Activated CD4-positive, alpha-beta T cell treated with anti-CD3 and anti-CD28 coated beads for 36 hours (primary cell): ENCODE measurements at regions of chr14 and their contacts with region 1.

Region 1: DNA sequence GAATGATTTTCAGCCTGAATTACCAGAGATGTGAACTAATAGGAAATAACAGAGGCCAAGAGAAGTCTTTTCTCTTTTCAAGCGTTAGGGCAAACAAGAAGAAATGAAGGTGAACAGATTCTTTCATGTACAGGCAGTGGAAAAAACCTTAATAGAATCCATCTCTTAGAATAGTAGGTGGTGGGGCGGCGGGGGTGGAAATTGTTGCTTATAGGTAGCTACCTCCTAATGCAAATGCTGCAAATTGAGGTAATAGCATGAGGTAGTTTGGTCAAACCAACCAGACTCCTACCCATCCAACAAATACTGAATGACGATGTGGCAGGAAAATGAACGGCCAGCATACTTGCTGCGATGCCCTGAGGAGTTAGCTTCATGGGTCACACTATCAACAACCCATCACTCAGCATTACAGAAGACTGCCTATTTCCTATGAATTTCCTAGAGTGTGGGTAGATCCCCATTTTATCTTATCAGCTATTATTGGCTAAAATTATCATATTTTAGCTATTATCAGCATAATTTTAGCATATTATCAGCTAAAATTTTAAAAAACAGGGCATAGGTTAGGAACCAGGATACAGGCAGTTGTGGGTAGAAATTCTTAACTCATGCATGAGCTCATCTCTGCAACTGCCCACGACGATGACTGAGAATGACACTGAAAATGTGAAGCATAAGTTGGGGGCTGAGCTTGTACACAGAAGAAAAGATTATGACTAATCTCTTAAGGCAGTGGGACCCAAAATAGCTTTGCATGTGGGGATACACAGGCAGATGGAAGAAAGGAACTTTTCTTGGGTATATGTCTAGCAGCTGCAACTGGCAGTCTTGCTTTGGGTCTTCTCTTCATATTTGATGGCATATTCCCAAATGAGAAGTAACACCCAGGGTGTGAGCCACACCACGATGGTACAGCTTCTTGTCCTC is 68.7 kb downstream of the NIN start:
- DNase-seq: peak; percentile 79
- ATAC-seq: peak; percentile 99
- H3K4me3 Mint-ChIP-seq: no peak overlapping the region
- H3K27ac Mint-ChIP-seq: peak overlapping the region; percentile 58
- H3K4me1 Mint-ChIP-seq: peaks cover 31% of the 10 kb centered on the region
- H3K27me3 Mint-ChIP-seq: no peaks in the 10 kb centered on the region

Region 2: DNA sequence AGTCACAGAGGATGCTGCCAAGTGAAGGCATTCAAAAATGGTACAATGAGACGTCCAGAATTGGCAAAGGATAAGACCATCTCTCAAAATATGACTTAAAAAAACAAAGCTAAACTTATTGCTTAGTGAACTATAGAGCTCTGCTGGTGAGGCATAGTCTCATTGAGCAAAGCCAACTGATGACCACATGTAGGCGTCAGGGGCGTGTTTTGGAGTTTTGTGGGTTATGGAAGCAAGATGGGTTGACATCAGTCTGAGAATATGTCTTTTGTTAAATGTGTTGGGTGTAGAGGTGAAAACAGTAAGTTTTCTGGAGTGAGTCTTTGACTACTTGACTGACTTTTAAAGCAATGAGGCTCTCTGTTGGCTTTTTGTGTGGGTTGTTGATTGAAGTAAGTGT is 155.1 kb before region 1 on chr14:
- CTCF ChIA-PET with region 1: no interaction called
- POLR2A ChIA-PET with region 1: interaction called, 10 read pairs
- intact Hi-C with region 1: no loop called
- DNase-seq: peak; percentile 74
- ATAC-seq: peak; percentile 86
- H3K4me3 Mint-ChIP-seq: no peak overlapping the region
- H3K27ac Mint-ChIP-seq: no peak overlapping the region
- H3K4me1 Mint-ChIP-seq: peaks cover 4% of the 10 kb centered on the region
- H3K27me3 Mint-ChIP-seq: no peaks in the 10 kb centered on the region

Region 3: DNA sequence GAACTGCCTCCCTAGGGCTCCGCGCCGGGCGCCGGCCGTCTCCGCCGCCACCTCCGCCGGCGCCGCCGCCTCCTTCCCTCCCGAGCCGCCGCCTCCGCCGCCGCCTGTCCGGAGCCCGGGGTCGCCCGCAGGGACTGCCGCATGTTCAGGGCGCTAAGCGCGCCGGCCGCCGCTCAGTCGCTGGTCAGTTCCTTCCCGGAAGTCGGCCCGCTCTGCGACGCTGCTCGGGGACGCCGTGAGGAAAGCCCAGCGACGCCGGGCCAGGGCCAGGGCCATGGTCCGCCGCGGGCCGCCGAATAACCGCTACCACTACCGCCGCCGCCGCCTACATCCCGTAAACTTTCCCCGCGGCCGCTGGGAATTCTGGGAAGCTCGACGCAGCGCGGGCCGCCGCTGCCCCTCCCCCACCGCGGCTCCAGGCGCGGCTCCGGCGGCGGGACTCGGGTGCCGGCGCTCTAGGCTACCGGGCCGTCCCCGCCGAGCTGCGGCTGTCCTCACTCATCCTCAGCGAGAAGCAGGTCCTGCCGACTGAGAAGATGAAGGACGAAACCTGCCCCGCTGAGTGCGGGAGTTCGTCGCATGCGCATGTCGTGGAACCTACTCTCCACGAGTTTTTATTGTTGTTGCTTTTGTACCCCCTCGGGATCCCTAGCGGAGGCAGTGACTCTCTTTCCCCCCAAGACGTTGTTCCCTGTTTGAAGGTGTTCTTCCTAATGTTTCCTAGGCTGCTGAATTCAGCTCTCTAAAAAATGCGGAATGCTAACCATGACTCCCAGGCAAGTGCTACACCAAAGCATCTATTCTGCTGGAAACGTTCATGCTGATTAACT is 94.1 kb before region 1 on chr14 and contains the start of gene SAV1:
- CTCF ChIA-PET with region 1: no interaction called
- POLR2A ChIA-PET with region 1: interaction called, 5 read pairs
- intact Hi-C with region 1: loop called (anchors 1 to 2 kb)
- DNase-seq: peak; percentile 71
- ATAC-seq: peak; percentile 79
- H3K4me3 Mint-ChIP-seq: no peak within 1 kb of the TSS
- H3K27ac Mint-ChIP-seq: peak within 1 kb of the TSS; percentile 80
- H3K4me1 Mint-ChIP-seq: peaks cover 12% of the 10 kb centered on the region
- H3K27me3 Mint-ChIP-seq: no peaks in the 10 kb centered on the region
- total RNA-seq, gene SAV1: 13.6 TPM

Region 4: DNA sequence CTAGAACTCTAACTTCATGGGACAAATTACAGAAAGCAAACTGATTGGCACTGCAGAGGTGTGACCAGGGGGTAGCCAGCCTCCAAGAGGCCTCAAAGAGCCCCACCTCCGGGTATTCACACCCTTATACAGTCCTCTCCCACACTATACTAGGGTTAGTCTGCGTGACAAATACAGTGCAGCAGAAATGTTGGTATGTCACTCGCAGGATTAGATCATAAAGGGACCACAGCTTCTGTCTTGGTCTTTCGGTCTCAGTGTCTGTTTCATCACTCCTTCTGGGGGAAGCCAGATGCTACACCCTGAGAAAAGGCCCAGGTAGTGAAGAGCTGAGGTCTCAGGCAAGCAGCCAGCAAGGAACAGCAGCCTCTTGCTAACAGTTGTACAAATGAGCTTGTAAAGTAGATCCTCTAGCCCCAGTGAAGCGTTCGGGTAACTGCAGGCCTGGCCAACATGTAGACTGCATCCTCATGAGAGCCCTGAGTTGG is 25.3 kb before region 1 on chr14:
- CTCF ChIA-PET with region 1: interaction called, 9 read pairs
- POLR2A ChIA-PET with region 1: interaction called, 10 read pairs
- intact Hi-C with region 1: loop called (anchors 1 kb)
- DNase-seq: peak; percentile 68
- ATAC-seq: peak; percentile 95
- H3K4me3 Mint-ChIP-seq: no peak overlapping the region
- H3K27ac Mint-ChIP-seq: peak overlapping the region; percentile 51
- H3K4me1 Mint-ChIP-seq: peaks cover 43% of the 10 kb centered on the region
- H3K27me3 Mint-ChIP-seq: no peaks in the 10 kb centered on the region

Region 5: GRCh38 chr14:50785457-50786063 is 23.3 kb after region 1 on chr14:
- CTCF ChIA-PET with region 1: interaction called, 13 read pairs
- POLR2A ChIA-PET with region 1: interaction called, 5 read pairs
- intact Hi-C with region 1: loop called in 1 of 2 experiments (anchors 1 kb)
- DNase-seq: no peak
- ATAC-seq: no peak
- H3K4me3 Mint-ChIP-seq: no peak overlapping the region
- H3K27ac Mint-ChIP-seq: peak overlapping the region; percentile 6
- H3K4me1 Mint-ChIP-seq: peaks cover 66% of the 10 kb centered on the region
- H3K27me3 Mint-ChIP-seq: no peaks in the 10 kb centered on the region

Region 6: GRCh38 chr14:50812856-50813543 is 50.7 kb after region 1 on chr14:
- CTCF ChIA-PET with region 1: no interaction called
- POLR2A ChIA-PET with region 1: no interaction called
- intact Hi-C with region 1: no loop called
- DNase-seq: peak; percentile 41
- ATAC-seq: peak; percentile 58
- H3K4me3 Mint-ChIP-seq: peak overlapping the region; percentile 54
- H3K27ac Mint-ChIP-seq: peak overlapping the region; percentile 95
- H3K4me1 Mint-ChIP-seq: peaks cover 35% of the 10 kb centered on the region
- H3K27me3 Mint-ChIP-seq: no peaks in the 10 kb centered on the region

Region 7: DNA sequence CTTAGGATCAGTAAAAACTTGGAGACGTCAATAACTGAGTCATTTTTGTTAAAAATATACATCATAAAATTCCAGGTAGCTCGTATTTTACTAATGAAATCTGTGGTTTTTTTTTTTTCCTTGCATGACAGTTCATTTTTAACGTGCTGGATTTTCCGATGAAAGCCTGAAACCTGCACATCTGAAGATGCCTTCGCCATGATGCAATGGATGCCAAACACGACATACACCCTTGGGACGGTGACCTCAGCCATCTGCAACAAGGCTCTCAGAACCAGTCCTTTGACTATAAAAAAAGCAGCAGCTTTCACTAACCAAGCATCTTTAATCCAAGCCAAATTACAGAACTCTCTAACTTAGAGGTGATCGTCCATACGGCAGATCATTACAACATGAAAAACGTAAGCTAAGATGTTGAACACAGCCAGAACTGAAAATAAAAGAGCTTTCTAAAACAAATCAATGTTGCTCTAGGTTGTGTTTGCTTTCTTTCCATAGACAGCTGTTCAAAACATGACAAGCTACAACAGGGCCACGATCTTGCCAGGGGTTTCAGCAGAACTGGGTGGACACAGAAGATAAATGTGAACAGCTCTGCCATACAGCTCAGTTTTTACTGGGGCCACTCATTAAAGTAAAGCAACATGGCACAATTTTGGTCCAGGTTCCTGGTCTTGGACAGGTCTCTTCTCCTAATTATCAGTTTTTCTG is 60.9 kb after region 1 on chr14:
- CTCF ChIA-PET with region 1: interaction called, 3 read pairs
- POLR2A ChIA-PET with region 1: no interaction called
- intact Hi-C with region 1: loop called in 1 of 2 experiments (anchors 2 kb)
- DNase-seq: peak; percentile 57
- ATAC-seq: peak; percentile 31
- H3K4me3 Mint-ChIP-seq: peak overlapping the region; percentile 64
- H3K27ac Mint-ChIP-seq: peak overlapping the region; percentile 82
- H3K4me1 Mint-ChIP-seq: peaks cover 85% of the 10 kb centered on the region
- H3K27me3 Mint-ChIP-seq: no peaks in the 10 kb centered on the region